B cell (primary cell): ENCODE measurements at regions of chr6 and their contacts with region 1.

Region 1: GRCh38 chr6:132279592-132280139 is 121.6 kb downstream of the MOXD1 start:
- DNase-seq: peak; percentile 90
- ATAC-seq: peak; percentile 84
- H3K4me3 ChIP-seq: peak overlapping the region; percentile 34 to 79 (median 48)
- H3K4me3 Mint-ChIP-seq: peak overlapping the region; percentile 92
- H3K27ac ChIP-seq: no peak overlapping the region
- H3K27ac Mint-ChIP-seq: peak overlapping the region; percentile 54
- H3K4me1 ChIP-seq: no peaks in the 10 kb centered on the region
- H3K4me1 Mint-ChIP-seq: no peaks in the 10 kb centered on the region
- H3K27me3 ChIP-seq: no peaks in the 10 kb centered on the region
- H3K27me3 Mint-ChIP-seq: peaks cover 4% of the 10 kb centered on the region
- CTCF ChIP-seq: peak; percentile 100

Region 2: DNA sequence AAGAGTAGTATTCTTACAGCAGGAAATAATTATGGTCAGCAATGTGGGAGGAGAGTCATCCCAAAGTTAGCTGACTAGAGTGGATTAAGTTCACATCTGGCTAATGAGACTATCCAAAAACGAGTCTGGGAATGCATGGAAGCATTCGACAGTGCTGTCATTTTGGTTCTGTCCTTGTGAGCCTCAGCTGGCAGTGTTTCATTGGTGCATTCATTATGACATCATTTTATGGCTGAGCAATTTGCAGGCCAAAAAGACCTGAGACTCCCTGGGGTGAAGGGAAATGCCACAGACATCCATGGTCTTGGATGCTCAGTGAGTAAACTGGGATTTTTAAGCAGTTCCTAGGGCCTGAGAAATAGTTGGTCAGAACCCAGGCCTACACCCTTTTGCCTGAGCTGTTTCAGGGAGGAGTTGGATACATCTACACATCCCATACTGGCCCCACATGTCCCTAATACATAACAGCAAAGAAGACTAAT is 132.1 kb before region 1 on chr6:
- CTCF ChIA-PET with region 1: no interaction called
- POLR2A ChIA-PET with region 1: no interaction called
- intact Hi-C with region 1: no loop called
- DNase-seq: no peak
- ATAC-seq: no peak
- H3K4me3 ChIP-seq: no peak overlapping the region
- H3K4me3 Mint-ChIP-seq: no peak overlapping the region
- H3K27ac ChIP-seq: no peak overlapping the region
- H3K27ac Mint-ChIP-seq: no peak overlapping the region
- H3K4me1 ChIP-seq: peaks cover 4 to 6% of the 10 kb centered on the region in 2 donors
- H3K4me1 Mint-ChIP-seq: peaks cover 31% of the 10 kb centered on the region
- H3K27me3 ChIP-seq: no peaks in the 10 kb centered on the region
- H3K27me3 Mint-ChIP-seq: no peaks in the 10 kb centered on the region
- CTCF ChIP-seq: no peak

Region 3: DNA sequence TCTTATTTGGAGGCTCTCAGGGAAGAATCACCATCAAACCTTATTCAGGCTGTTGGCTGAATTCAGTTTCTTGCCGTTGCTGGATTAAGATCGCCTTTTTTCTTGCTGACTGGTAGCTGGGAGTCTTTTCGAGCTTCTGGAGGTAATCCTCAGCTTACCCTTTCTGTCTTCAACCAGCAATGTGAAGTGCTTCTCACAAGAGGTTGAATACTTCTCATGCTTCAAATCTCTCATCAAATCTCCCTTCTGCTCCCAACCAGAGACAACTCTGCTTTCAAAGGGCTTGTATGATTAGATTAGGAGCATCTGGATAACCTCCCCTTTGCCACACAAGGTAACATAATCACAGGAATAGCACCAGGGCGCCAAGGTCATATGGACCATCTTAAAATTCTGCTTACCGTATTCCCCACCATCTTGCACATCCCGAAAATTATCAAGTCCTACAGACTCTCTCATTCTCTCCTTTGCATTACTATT is 15.6 kb before region 1 on chr6:
- CTCF ChIA-PET with region 1: interaction called, 83 read pairs
- POLR2A ChIA-PET with region 1: no interaction called
- intact Hi-C with region 1: no loop called
- DNase-seq: no peak
- ATAC-seq: no peak
- H3K4me3 ChIP-seq: no peak overlapping the region
- H3K4me3 Mint-ChIP-seq: no peak overlapping the region
- H3K27ac ChIP-seq: no peak overlapping the region
- H3K27ac Mint-ChIP-seq: no peak overlapping the region
- H3K4me1 ChIP-seq: peaks cover 15 to 17% of the 10 kb centered on the region in 2 donors
- H3K4me1 Mint-ChIP-seq: peaks cover 14% of the 10 kb centered on the region
- H3K27me3 ChIP-seq: no peaks in the 10 kb centered on the region
- H3K27me3 Mint-ChIP-seq: peaks cover 5% of the 10 kb centered on the region
- CTCF ChIP-seq: no peak

Region 4: DNA sequence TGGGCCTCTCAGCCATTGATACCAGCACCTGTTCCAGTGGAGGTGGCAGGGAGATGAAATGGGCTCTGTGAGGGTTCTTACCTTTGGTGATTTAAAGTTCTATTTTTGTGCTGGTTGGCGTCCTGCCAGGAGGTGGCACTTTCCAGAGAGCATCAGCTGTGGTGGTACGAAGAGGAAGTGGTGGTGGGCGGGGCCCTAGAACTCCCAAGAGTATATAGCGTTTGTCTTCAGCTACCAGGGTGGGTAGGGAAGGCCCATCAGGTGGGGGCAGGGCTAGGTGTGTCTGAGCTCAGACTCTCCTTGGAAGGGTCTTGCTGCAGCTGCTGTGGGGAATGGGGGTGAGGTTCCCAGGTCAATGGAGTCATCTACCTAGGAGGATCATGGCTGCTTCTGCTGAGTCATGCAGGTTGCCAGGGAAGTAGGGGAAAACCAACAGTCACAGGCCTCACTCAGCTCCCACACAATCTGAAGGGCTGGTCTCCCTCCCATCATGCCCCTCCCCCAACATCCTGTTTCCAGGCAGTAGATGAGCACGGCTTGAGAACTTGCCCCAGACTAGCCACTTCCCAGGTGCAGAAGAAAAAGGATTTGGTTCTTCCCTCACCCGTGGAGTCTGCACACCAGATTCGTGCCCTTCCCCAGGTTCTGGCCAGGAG is 75.0 kb after region 1 on chr6:
- CTCF ChIA-PET with region 1: interaction called, 25 read pairs
- POLR2A ChIA-PET with region 1: no interaction called
- intact Hi-C with region 1: no loop called
- DNase-seq: peak; percentile 94
- ATAC-seq: peak; percentile 87
- H3K4me3 ChIP-seq: peak overlapping the region in 4 of 5 experiments; percentile 10 to 37 (median 17)
- H3K4me3 Mint-ChIP-seq: peak overlapping the region; percentile 67
- H3K27ac ChIP-seq: peak overlapping the region; percentile 89 to 95
- H3K27ac Mint-ChIP-seq: peak overlapping the region; percentile 89
- H3K4me1 ChIP-seq: peaks cover 43 to 63% of the 10 kb centered on the region in 2 donors
- H3K4me1 Mint-ChIP-seq: peaks cover 67% of the 10 kb centered on the region
- H3K27me3 ChIP-seq: no peaks in the 10 kb centered on the region
- H3K27me3 Mint-ChIP-seq: no peaks in the 10 kb centered on the region
- CTCF ChIP-seq: no peak

Region 5: DNA sequence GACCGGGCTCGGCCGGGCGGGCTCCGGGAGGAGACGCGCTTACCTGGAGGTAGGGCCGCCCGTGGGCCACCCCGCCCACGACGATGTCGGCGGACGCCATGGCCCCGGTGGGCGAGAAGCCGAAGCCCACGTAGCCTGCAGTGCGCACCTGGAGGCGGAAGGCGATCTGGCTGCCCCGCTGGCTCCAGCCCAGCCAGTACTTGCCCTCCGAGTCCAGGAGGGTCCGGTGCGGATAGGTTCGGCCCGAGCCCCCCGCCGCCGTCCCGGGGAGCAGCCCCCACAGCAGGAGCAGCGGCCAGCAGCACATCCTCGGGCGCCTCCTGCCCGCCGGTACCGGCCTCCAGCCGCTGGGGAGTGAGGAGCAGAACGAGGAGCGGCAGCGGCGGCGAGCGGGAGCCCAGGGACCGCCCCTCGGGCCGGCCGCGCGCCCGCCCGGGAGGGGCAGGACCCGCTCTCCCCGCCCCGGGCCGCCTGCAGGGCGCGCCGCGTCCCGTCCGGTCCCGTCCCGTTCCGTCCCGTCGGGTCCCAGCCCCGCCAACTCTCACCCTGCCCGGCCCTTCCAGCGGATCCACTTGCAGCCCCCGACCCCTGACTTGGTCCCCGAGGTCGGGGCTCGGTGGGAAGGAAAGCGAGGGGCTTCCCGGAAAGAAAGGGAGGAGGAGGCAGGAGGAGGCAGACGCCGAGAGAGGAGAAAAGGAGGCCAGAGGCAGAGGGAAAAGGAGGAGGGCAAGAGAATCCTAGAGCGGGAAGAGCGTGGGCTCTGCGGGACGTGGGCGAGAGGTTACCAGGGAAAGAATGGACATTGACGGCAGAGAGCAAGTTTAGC is 121.7 kb after region 1 on chr6 and contains the start of gene MOXD1:
- CTCF ChIA-PET with region 1: interaction called, 18 read pairs
- POLR2A ChIA-PET with region 1: no interaction called
- intact Hi-C with region 1: no loop called
- DNase-seq: peak; percentile 64
- ATAC-seq: peak; percentile 83
- H3K4me3 ChIP-seq: peak within 1 kb of the TSS; percentile 51 to 84 (median 73)
- H3K4me3 Mint-ChIP-seq: peak within 1 kb of the TSS; percentile 88
- H3K27ac ChIP-seq: no peak within 1 kb of the TSS
- H3K27ac Mint-ChIP-seq: peak within 1 kb of the TSS; percentile 76
- H3K4me1 ChIP-seq: peaks cover 13 to 14% of the 10 kb centered on the region in 2 donors
- H3K4me1 Mint-ChIP-seq: peaks cover 24% of the 10 kb centered on the region
- H3K27me3 ChIP-seq: peaks cover 0 to 19% (median 11%) of the 10 kb centered on the region in 4 experiments
- H3K27me3 Mint-ChIP-seq: peaks cover 20% of the 10 kb centered on the region
- CTCF ChIP-seq: no peak
- total RNA-seq, gene MOXD1: 6.7 and 7.0 TPM in 2 replicates

Region 6: GRCh38 chr6:132471788-132472187 is 192.1 kb after region 1 on chr6:
- CTCF ChIA-PET with region 1: interaction called, 22 read pairs
- POLR2A ChIA-PET with region 1: no interaction called
- intact Hi-C with region 1: no loop called
- DNase-seq: no peak
- ATAC-seq: no peak
- H3K4me3 ChIP-seq: no peak overlapping the region
- H3K4me3 Mint-ChIP-seq: no peak overlapping the region
- H3K27ac ChIP-seq: peak overlapping the region in 1 of 2 donors; percentile 0
- H3K27ac Mint-ChIP-seq: no peak overlapping the region
- H3K4me1 ChIP-seq: peaks cover 5 to 15% of the 10 kb centered on the region in 2 donors
- H3K4me1 Mint-ChIP-seq: peaks cover 12% of the 10 kb centered on the region
- H3K27me3 ChIP-seq: no peaks in the 10 kb centered on the region
- H3K27me3 Mint-ChIP-seq: no peaks in the 10 kb centered on the region
- CTCF ChIP-seq: no peak

Region 7: GRCh38 chr6:132512638-132513632 is 233.3 kb after region 1 on chr6 and contains the start of gene STX7:
- CTCF ChIA-PET with region 1: interaction called, 17 read pairs
- POLR2A ChIA-PET with region 1: no interaction called
- intact Hi-C with region 1: no loop called
- DNase-seq: peak; percentile 94
- ATAC-seq: peak; percentile 79
- H3K4me3 ChIP-seq: peak within 1 kb of the TSS; percentile 59 to 98 (median 85)
- H3K4me3 Mint-ChIP-seq: peak within 1 kb of the TSS; percentile 93
- H3K27ac ChIP-seq: peak within 1 kb of the TSS; percentile 90 to 92
- H3K27ac Mint-ChIP-seq: peak within 1 kb of the TSS; percentile 95
- H3K4me1 ChIP-seq: peaks cover 33 to 36% of the 10 kb centered on the region in 2 donors
- H3K4me1 Mint-ChIP-seq: peaks cover 56% of the 10 kb centered on the region
- H3K27me3 ChIP-seq: no peaks in the 10 kb centered on the region
- H3K27me3 Mint-ChIP-seq: no peaks in the 10 kb centered on the region
- CTCF ChIP-seq: peak; percentile 12
- total RNA-seq, gene STX7: 221 and 227 TPM in 2 replicates

Region 8: DNA sequence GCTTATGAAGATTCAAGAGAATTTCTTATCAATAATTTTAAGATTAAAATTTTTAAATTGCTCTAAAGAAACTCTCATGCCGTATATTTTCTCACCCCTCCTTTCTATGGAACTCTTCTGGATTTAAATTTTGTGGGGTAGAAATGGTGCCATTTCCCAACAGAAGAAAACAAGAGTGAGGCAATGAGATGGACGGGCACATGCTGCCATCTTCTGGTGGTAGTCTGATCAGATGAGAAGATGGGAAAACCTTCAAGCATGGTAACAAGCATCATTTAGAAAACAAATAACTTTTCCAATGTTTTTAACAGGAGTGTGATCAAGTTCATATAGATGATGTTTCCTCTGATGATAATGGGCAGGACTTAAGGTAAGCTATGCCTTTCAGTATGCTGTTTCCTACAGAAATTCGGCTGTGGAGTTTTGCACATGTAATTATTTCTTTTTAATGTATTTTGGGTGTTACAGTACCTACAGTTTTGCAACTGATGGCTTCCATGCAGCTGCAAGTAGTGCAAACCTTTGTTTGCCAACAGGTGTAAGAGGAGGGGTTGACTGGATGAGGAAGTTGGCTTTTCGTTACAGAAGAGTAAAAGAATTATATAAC is 1232.8 kb after region 1 on chr6:
- CTCF ChIA-PET with region 1: no interaction called
- POLR2A ChIA-PET with region 1: no interaction called
- intact Hi-C with region 1: loop called (anchors 5 kb)
- DNase-seq: peak; percentile 26
- ATAC-seq: no peak
- H3K4me3 ChIP-seq: no peak overlapping the region
- H3K4me3 Mint-ChIP-seq: no peak overlapping the region
- H3K27ac ChIP-seq: no peak overlapping the region
- H3K27ac Mint-ChIP-seq: no peak overlapping the region
- H3K4me1 ChIP-seq: no peaks in the 10 kb centered on the region
- H3K4me1 Mint-ChIP-seq: no peaks in the 10 kb centered on the region
- H3K27me3 ChIP-seq: no peaks in the 10 kb centered on the region
- H3K27me3 Mint-ChIP-seq: peaks cover 15% of the 10 kb centered on the region
- CTCF ChIP-seq: no peak